CD8-positive, alpha-beta memory T cell (primary cell): ENCODE measurements at regions of chr9 and their contacts with region 1.

Region 1: GRCh38 chr9:112379177-112380101 is 469 bp upstream of the HSDL2 start:
- DNase-seq: peak; percentile 93 to 99 (median 97)
- H3K4me3 ChIP-seq: peak overlapping the region; percentile 88
- H3K4me3 Mint-ChIP-seq: peak overlapping the region; percentile 97 to 99 (median 99)
- H3K27ac ChIP-seq: peak overlapping the region; percentile 87
- H3K27ac Mint-ChIP-seq: peak overlapping the region; percentile 92 to 99 (median 98)
- H3K4me1 ChIP-seq: peaks cover 20% of the 10 kb centered on the region
- H3K4me1 Mint-ChIP-seq: peaks cover 35 to 64% (median 49%) of the 10 kb centered on the region in 3 donors
- H3K27me3 ChIP-seq: no peaks in the 10 kb centered on the region
- H3K27me3 Mint-ChIP-seq: no peaks in the 10 kb centered on the region

Region 2: GRCh38 chr9:112207451-112207850 is 172.0 kb before region 1 on chr9:
- CTCF ChIA-PET with region 1: no interaction called
- POLR2A ChIA-PET with region 1: no interaction called
- DNase-seq: no peak
- H3K4me3 ChIP-seq: no peak overlapping the region
- H3K4me3 Mint-ChIP-seq: no peak overlapping the region
- H3K27ac ChIP-seq: no peak overlapping the region
- H3K27ac Mint-ChIP-seq: no peak overlapping the region
- H3K4me1 ChIP-seq: no peaks in the 10 kb centered on the region
- H3K4me1 Mint-ChIP-seq: no peaks in the 10 kb centered on the region
- H3K27me3 ChIP-seq: no peaks in the 10 kb centered on the region
- H3K27me3 Mint-ChIP-seq: no peaks in the 10 kb centered on the region

Region 3: GRCh38 chr9:112486221-112487007 is 107.0 kb after region 1 on chr9 and contains the start of gene KIAA1958:
- CTCF ChIA-PET with region 1: interaction called, 6 read pairs
- POLR2A ChIA-PET with region 1: interaction called, 16 read pairs
- DNase-seq: peak; percentile 66 to 88 (median 78)
- H3K4me3 ChIP-seq: peak within 1 kb of the TSS; percentile 82
- H3K4me3 Mint-ChIP-seq: peak within 1 kb of the TSS; percentile 96 to 99 (median 98)
- H3K27ac ChIP-seq: peak within 1 kb of the TSS; percentile 75
- H3K27ac Mint-ChIP-seq: peak within 1 kb of the TSS; percentile 81 to 97 (median 90)
- H3K4me1 ChIP-seq: peaks cover 13% of the 10 kb centered on the region
- H3K4me1 Mint-ChIP-seq: peaks cover 20 to 38% (median 28%) of the 10 kb centered on the region in 3 donors
- H3K27me3 ChIP-seq: no peaks in the 10 kb centered on the region
- H3K27me3 Mint-ChIP-seq: no peaks in the 10 kb centered on the region
- total RNA-seq, gene KIAA1958: 6.4 to 6.7 TPM